Adrenal gland (tissue), 19 donors: ENCODE measurements at regions of chr3 and their contacts with region 1.

Region 1: GRCh38 chr3:136075218-136075808 is 109.8 kb downstream of the PPP2R3A start:
- DNase-seq: peak; percentile 56 to 92 (median 71)
- H3K4me3 ChIP-seq: no peak overlapping the region
- H3K27ac ChIP-seq: no peak overlapping the region
- H3K4me1 ChIP-seq: peaks cover 0 to 21% of the 10 kb centered on the region in 2 donors
- H3K27me3 ChIP-seq: no peaks in the 10 kb centered on the region
- CTCF ChIP-seq: peak; percentile 88 to 98 (median 98)
- POLR2A ChIP-seq: no peak

Region 2: DNA sequence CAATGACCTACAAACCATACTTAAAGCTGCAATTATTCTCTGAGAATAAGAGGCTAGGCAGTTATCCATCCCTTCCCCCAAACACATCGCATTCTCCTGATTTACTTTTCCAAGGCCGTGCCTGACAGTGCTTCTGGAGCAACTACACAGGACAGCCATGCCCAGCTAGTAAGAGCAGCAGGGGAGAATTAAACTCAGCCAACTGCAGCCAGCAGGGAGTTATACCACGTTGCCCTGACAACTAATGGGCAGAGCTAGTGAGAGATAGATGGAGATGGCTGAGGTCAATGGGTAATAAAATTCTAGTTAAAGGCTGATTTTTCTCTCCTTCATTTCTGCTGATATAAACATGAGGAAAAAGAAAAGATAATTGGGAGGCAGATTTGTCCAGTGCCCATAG is 303.6 kb before region 1 on chr3:
- intact Hi-C with region 1: no loop called
- DNase-seq: peak; percentile 18 to 62 (median 24)
- H3K4me3 ChIP-seq: no peak overlapping the region
- H3K27ac ChIP-seq: no peak overlapping the region
- H3K4me1 ChIP-seq: no peaks in the 10 kb centered on the region
- H3K27me3 ChIP-seq: no peaks in the 10 kb centered on the region
- CTCF ChIP-seq: no peak
- POLR2A ChIP-seq: no peak

Region 3: GRCh38 chr3:136196401-136197158 is 121.3 kb after region 1 on chr3:
- intact Hi-C with region 1: loop called in 1 of 2 experiments (anchors 10 kb)
- DNase-seq: peak; percentile 98 to 99 (median 98)
- H3K4me3 ChIP-seq: peak overlapping the region; percentile 25 to 81 (median 68)
- H3K27ac ChIP-seq: peak overlapping the region; percentile 98 to 100 (median 100)
- H3K4me1 ChIP-seq: peaks cover 25 to 30% of the 10 kb centered on the region in 2 donors
- H3K27me3 ChIP-seq: no peaks in the 10 kb centered on the region
- CTCF ChIP-seq: peak in 2 of 6 experiments; percentile 7 to 16
- POLR2A ChIP-seq: peak; percentile 46 to 82

Region 4: GRCh38 chr3:136249593-136250225 is 174.4 kb after region 1 on chr3:
- intact Hi-C with region 1: loop called in 1 of 2 experiments (anchors 5 kb)
- DNase-seq: no peak
- H3K4me3 ChIP-seq: peak overlapping the region in 3 of 4 donors; percentile 56 to 92 (median 75)
- H3K27ac ChIP-seq: peak overlapping the region; percentile 62 to 100 (median 90)
- H3K4me1 ChIP-seq: peaks cover 0 to 15% of the 10 kb centered on the region in 2 donors
- H3K27me3 ChIP-seq: no peaks in the 10 kb centered on the region
- CTCF ChIP-seq: no peak
- POLR2A ChIP-seq: no peak

Region 5: GRCh38 chr3:136385457-136385856 is 310.1 kb after region 1 on chr3:
- intact Hi-C with region 1: loop called in 1 of 2 experiments (anchors 10 kb)
- DNase-seq: no peak
- H3K4me3 ChIP-seq: no peak overlapping the region
- H3K27ac ChIP-seq: no peak overlapping the region
- H3K4me1 ChIP-seq: peaks cover 0 to 6% of the 10 kb centered on the region in 2 donors
- H3K27me3 ChIP-seq: no peaks in the 10 kb centered on the region
- CTCF ChIP-seq: no peak
- POLR2A ChIP-seq: no peak

Region 6: GRCh38 chr3:136772709-136773108 is 697.4 kb after region 1 on chr3:
- intact Hi-C with region 1: loop called in 1 of 2 experiments (anchors 10 kb)
- DNase-seq: no peak
- H3K4me3 ChIP-seq: no peak overlapping the region
- H3K27ac ChIP-seq: no peak overlapping the region
- H3K4me1 ChIP-seq: no peaks in the 10 kb centered on the region
- H3K27me3 ChIP-seq: no peaks in the 10 kb centered on the region
- CTCF ChIP-seq: no peak
- POLR2A ChIP-seq: no peak

Region 7: GRCh38 chr3:137013955-137014688 is 938.8 kb after region 1 on chr3:
- intact Hi-C with region 1: loop called (anchors 5 to 10 kb)
- DNase-seq: peak; percentile 88 to 97 (median 93)
- H3K4me3 ChIP-seq: peak overlapping the region in 3 of 4 donors; percentile 6 to 77 (median 40)
- H3K27ac ChIP-seq: peak overlapping the region in 4 of 5 donors; percentile 70 to 87 (median 81)
- H3K4me1 ChIP-seq: peaks cover 0 to 3% of the 10 kb centered on the region in 2 donors
- H3K27me3 ChIP-seq: no peaks in the 10 kb centered on the region
- CTCF ChIP-seq: peak; percentile 85 to 98 (median 95)
- POLR2A ChIP-seq: no peak